Ovary (tissue), 10 donors: ENCODE measurements at regions of chr11 and their contacts with region 1.

Region 1: GRCh38 chr11:130069684-130070108 is at the start of gene APLP2:
- DNase-seq: peak; percentile 98 to 100 (median 99)
- H3K4me3 ChIP-seq: peak within 1 kb of the TSS; percentile 94
- H3K27ac ChIP-seq: peak within 1 kb of the TSS; percentile 95 to 96
- H3K4me1 ChIP-seq: peaks cover 8% of the 10 kb centered on the region
- H3K27me3 ChIP-seq: no peaks in the 10 kb centered on the region
- CTCF ChIP-seq: no peak
- EP300 ChIP-seq: no peak
- POLR2A ChIP-seq: peak; percentile 73
- total RNA-seq, gene APLP2: 198 to 281 (median 251) TPM

Region 2: GRCh38 chr11:128069665-128070064 is 2000.0 kb before region 1 on chr11:
- intact Hi-C with region 1: no loop called
- DNase-seq: no peak
- H3K4me3 ChIP-seq: no peak overlapping the region
- H3K27ac ChIP-seq: no peak overlapping the region
- H3K4me1 ChIP-seq: no peaks in the 10 kb centered on the region
- H3K27me3 ChIP-seq: no peaks in the 10 kb centered on the region
- CTCF ChIP-seq: no peak
- EP300 ChIP-seq: no peak
- POLR2A ChIP-seq: no peak

Region 3: GRCh38 chr11:130002846-130003716 is 66.6 kb before region 1 on chr11:
- intact Hi-C with region 1: loop called in 3 of 4 experiments (anchors 1 to 5 kb)
- DNase-seq: peak; percentile 93 to 95 (median 94)
- H3K4me3 ChIP-seq: peak overlapping the region; percentile 89
- H3K27ac ChIP-seq: peak overlapping the region; percentile 96 to 99
- H3K4me1 ChIP-seq: peaks cover 3% of the 10 kb centered on the region
- H3K27me3 ChIP-seq: no peaks in the 10 kb centered on the region
- CTCF ChIP-seq: no peak
- EP300 ChIP-seq: no peak
- POLR2A ChIP-seq: peak; percentile 73

Region 4: GRCh38 chr11:130022798-130023583 is 46.7 kb before region 1 on chr11:
- intact Hi-C with region 1: loop called in 1 of 4 experiments (anchors 10 kb)
- DNase-seq: no peak
- H3K4me3 ChIP-seq: no peak overlapping the region
- H3K27ac ChIP-seq: no peak overlapping the region
- H3K4me1 ChIP-seq: peaks cover 2% of the 10 kb centered on the region
- H3K27me3 ChIP-seq: no peaks in the 10 kb centered on the region
- CTCF ChIP-seq: no peak
- EP300 ChIP-seq: no peak
- POLR2A ChIP-seq: no peak

Region 5: DNA sequence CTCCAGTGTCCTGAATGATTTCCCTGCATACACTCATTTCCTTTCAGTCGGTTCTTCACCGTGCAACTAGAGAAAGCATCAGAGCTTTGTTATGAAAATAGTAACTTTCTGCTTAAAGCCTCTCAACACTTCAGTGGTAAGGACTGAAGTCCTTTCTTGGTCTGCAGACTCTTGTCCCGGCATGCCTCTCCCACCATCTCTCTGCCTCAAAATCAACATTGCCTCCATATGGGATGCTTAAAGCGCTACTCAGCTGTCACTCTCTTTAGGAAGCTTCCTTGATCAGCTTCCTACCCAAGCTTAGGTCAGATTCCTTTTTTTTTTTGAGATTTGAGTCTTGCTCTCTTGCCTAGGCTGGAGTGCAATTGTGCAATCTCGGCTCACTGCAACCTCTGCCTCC is 36.7 kb after region 1 on chr11:
- intact Hi-C with region 1: loop called in 1 of 4 experiments (anchors 2 kb)
- DNase-seq: no peak
- H3K4me3 ChIP-seq: no peak overlapping the region
- H3K27ac ChIP-seq: no peak overlapping the region
- H3K4me1 ChIP-seq: peaks cover 4% of the 10 kb centered on the region
- H3K27me3 ChIP-seq: no peaks in the 10 kb centered on the region
- CTCF ChIP-seq: no peak
- EP300 ChIP-seq: no peak
- POLR2A ChIP-seq: no peak

Region 6: DNA sequence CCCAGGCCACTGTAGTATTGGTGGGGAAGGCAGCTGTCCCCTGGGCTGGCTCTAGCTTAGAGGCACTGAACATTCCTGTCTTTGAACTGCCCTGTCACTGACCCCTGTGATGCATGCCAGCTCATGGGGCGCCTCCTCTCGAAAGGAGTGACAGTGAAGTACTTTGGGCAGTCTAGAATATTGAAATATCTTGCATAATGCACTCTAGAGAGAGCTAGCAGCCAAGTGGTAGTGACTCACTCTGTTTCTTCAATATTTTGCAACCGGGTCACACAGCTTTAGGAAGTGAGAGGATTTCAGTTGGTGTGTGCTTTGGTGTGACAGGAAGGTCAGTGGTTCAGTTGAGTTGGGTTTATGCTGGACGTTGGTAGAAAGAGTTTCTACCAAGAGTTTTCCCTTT is 54.4 kb after region 1 on chr11:
- intact Hi-C with region 1: loop called in 1 of 4 experiments (anchors 10 kb)
- DNase-seq: peak in 1 of 5 donors; percentile 38
- H3K4me3 ChIP-seq: no peak overlapping the region
- H3K27ac ChIP-seq: no peak overlapping the region
- H3K4me1 ChIP-seq: no peaks in the 10 kb centered on the region
- H3K27me3 ChIP-seq: no peaks in the 10 kb centered on the region
- CTCF ChIP-seq: no peak
- EP300 ChIP-seq: no peak
- POLR2A ChIP-seq: no peak